ENCODE measurements at regions of chr6 and their contacts with region 1.

Region 1: GRCh38 chr6:106512048-106512967 is 117.0 kb downstream of the RTN4IP1 start:
- DNase-seq: peak; percentile 68
- ATAC-seq: peak; percentile 83
- H3K4me3 ChIP-seq: peak overlapping the region; percentile 67 to 79 (median 68)
- H3K27ac ChIP-seq: peak overlapping the region; percentile 84
- H3K4me1 ChIP-seq: peaks cover 56% of the 10 kb centered on the region
- H3K27me3 ChIP-seq: peaks cover 0 to 13% of the 10 kb centered on the region in 2 experiments; a peak in 4 of 5 replicates
- CTCF ChIP-seq: peak; percentile 61
- EP300 ChIP-seq: peak in 1 of 2 experiments; percentile 20; a peak in 1 of 4 replicates
- POLR2A ChIP-seq: peak; percentile 68 to 74
- RAD21 ChIP-seq: no peak; the same call in none of the 2 replicates

Region 2: DNA sequence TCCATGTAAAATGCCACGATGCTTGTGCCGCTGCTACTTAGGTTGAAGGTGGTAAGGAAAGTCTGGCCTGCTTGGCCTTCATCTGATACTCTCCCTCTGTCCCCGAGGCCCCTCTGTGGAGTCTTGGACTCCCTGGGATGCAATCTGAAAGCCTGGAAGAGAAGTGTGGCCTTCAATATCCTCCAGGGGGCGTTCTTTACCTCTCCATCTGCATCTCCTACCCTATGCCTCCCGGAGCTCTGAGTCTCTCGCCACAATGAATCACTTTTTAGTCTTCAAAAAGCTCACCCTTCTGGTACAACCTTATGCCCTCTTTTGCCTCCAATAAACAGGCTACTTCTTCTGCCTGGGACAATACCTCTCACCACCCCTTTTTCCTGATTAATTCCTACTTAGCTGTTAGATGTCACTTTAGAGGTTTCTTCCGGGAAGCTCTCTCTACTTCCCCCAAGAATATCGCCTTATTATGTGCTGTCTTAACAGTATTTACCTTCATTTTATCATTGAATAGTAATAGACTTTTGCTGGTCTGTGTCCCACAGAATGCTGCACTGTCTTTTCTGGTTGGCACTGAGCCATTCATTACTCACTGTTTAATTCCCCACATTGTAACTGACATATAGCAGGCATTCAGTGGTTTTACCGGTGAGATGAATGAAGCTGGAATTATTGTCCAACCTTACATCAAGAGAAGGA is 172.8 kb before region 1 on chr6:
- CTCF ChIA-PET with region 1: no interaction called
- POLR2A ChIA-PET with region 1: no interaction called
- in situ Hi-C with region 1: no loop called
- intact Hi-C with region 1: loop called (anchors 5 kb)
- DNase-seq: peak; percentile 46
- ATAC-seq: peak; percentile 98
- H3K4me3 ChIP-seq: no peak overlapping the region
- H3K27ac ChIP-seq: no peak overlapping the region
- H3K4me1 ChIP-seq: no peaks in the 10 kb centered on the region
- H3K27me3 ChIP-seq: peaks cover 0 to 8% of the 10 kb centered on the region in 2 experiments; a peak in 2 of 5 replicates
- CTCF ChIP-seq: peak; percentile 73
- EP300 ChIP-seq: no peak
- POLR2A ChIP-seq: no peak
- RAD21 ChIP-seq: no peak

Region 3: GRCh38 chr6:106377061-106377540 is 135.2 kb before region 1 on chr6:
- CTCF ChIA-PET with region 1: no interaction called
- POLR2A ChIA-PET with region 1: no interaction called
- in situ Hi-C with region 1: no loop called
- intact Hi-C with region 1: no loop called
- DNase-seq: no peak
- ATAC-seq: no peak
- H3K4me3 ChIP-seq: no peak overlapping the region
- H3K27ac ChIP-seq: no peak overlapping the region
- H3K4me1 ChIP-seq: no peaks in the 10 kb centered on the region
- H3K27me3 ChIP-seq: peaks cover 0 to 13% of the 10 kb centered on the region in 2 experiments; a peak in 1 of 5 replicates
- CTCF ChIP-seq: no peak
- EP300 ChIP-seq: no peak
- POLR2A ChIP-seq: no peak
- RAD21 ChIP-seq: no peak

Region 4: DNA sequence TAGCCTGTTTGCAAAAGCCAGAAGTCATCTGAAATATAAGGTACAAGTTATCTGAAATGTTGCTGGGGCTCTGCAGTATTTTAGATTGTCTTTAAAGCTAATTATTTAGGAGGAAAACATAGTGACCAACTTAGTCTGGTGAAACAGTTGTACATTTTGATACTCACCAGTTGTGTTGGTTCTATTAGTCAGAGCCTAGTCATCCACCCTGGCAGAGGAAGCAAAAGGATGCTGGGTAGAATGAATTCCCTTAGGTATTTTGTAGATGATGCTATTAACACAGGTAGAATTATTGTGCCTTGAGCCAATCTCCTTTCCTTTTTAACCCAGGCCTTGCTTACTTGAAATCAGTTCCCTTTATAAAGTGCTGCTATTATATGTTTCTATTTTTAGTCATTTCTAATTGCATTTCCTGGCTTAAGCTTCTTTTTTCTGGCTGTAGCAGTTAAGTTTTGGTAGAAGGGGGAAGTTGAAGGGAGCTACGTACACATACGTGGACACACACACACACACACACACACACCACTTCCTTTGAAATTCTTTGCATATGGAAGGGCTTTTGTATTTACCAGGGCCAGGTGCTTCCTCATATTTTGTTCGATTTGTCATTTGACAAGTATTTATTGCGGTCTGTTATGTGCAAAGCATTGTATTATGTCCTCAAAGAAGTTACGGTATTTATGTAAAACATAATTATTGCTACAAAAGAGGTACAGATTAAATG is 34.5 kb after region 1 on chr6:
- CTCF ChIA-PET with region 1: no interaction called
- POLR2A ChIA-PET with region 1: no interaction called
- in situ Hi-C with region 1: no loop called
- intact Hi-C with region 1: loop called (anchors 5 kb)
- DNase-seq: peak; percentile 36
- ATAC-seq: no peak; the same call in 2 of the 3 replicates
- H3K4me3 ChIP-seq: no peak overlapping the region
- H3K27ac ChIP-seq: peak overlapping the region; percentile 53
- H3K4me1 ChIP-seq: peaks cover 32% of the 10 kb centered on the region
- H3K27me3 ChIP-seq: no peaks in the 10 kb centered on the region
- CTCF ChIP-seq: no peak
- EP300 ChIP-seq: no peak
- POLR2A ChIP-seq: no peak
- RAD21 ChIP-seq: no peak

Region 5: DNA sequence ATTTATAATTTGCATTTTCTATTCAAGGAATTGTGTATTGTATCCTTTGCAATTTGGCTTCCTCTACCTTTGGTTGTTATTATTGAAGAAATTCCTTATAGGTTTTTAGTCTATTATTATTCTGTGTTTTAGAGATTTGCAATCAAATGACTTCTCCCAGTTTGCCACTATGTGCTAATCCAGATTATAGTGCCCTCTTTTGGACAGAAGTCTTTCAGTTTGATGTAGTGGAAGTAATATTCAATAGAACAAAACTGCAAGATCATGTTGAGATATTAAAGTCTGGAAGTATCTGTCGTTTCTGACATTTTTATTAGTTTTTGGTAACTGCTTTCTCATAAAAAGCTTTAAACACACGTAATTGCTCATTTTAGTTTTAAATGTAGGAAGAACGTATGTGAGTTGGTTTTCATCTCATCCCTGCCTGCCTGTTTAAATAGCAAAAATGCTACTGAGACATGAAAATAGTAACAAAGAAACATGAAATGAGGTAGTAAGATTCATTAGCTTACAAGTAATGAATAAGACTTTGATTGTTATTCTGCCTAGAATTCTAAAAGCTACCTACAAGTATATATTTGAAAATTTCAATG is 44.2 kb after region 1 on chr6:
- CTCF ChIA-PET with region 1: no interaction called
- POLR2A ChIA-PET with region 1: no interaction called
- in situ Hi-C with region 1: no loop called
- intact Hi-C with region 1: loop called (anchors 2 kb)
- DNase-seq: peak; percentile 15
- ATAC-seq: no peak
- H3K4me3 ChIP-seq: no peak overlapping the region
- H3K27ac ChIP-seq: no peak overlapping the region
- H3K4me1 ChIP-seq: peaks cover 41% of the 10 kb centered on the region
- H3K27me3 ChIP-seq: no peaks in the 10 kb centered on the region
- CTCF ChIP-seq: peak; percentile 21; the same call in 1 of the 2 replicates
- EP300 ChIP-seq: no peak
- POLR2A ChIP-seq: no peak
- RAD21 ChIP-seq: no peak